ENCODE measurements at regions of chr11 and their contacts with region 1.

Region 1: DNA sequence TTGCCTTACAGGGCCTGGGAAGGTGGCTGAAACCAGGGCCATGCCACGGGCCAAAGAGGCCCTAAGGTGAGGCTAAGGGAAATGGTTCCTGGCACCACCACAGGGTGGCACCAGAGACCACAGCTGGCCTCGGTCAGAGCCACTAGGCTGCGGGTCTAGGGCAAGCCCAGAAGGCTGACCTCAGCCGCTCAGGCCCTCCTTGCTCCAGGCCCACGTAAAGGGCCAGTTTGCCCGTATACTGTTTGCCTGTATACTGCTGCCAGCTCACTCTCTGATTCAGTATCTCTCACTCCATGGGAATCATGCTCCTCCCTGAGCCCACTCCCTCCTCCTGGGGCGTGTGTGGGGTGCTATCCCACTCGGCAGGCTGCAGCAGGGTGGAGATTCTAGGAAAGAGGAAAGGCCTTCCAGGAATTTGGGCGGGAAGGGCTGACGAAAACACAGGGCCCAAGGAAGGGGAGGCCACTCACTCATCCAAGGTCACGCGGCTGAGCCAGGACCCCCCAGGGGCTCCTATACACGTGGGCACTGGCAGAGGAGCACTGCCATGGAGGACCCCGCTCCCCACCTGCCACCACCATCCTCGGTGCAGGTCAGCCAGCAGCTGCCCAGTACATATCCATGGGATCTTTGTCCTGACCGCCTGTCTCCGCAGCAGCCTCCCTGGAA is 62.4 kb downstream of the NECTIN1 start:
- DNase-seq: peak in 1 of 2 donors; percentile 84
- H3K4me3 ChIP-seq: no peak overlapping the region
- H3K27ac ChIP-seq: no peak overlapping the region
- H3K4me1 ChIP-seq: peaks cover 0 to 5% of the 10 kb centered on the region in 2 donors
- H3K27me3 ChIP-seq: no peaks in the 10 kb centered on the region
- CTCF ChIP-seq: peak; percentile 87 to 93 (median 91)

Region 2: DNA sequence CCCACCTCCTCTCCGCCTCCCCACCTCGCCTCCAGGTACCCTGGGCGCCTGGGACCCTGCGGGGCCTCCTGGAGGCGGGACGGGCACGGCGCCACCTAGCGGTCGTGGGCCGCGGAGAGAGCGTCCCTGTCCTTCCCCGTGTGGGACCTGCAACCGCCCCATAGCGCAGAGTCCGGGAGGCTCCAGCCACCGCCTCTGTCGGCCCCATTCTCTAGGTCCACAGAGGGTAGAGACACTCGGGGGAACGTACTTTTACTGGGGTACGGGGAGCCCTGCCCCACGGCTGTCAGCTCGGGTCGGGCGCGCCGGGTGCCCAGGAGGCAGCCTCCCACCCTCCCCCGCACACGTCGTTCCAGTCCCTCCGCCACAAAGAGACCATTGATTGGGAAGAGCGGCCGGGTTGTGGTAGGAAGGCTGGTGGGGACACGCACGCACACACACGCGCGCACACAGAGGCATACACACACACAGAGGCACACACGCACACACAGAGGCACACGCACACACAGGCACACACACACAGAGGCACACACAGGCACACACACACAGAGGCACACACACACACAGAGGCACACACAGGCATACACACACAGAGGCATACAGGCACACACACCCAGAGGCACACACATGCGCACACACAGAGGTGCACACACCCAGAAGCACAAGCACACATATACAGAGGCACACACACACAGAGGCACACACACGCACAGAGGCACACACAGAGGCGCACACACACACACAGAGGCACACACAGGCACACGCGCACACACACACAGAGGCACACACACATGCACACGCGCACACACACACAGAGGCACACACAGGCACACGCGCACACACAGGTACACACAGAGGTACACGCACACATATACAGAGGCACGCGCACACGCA is 75.0 kb after region 1 on chr11:
- intact Hi-C with region 1: loop called (anchors 5 kb)
- DNase-seq: no peak
- H3K4me3 ChIP-seq: peak overlapping the region; percentile 36 to 39
- H3K27ac ChIP-seq: no peak overlapping the region
- H3K4me1 ChIP-seq: peaks cover 0 to 7% of the 10 kb centered on the region in 2 donors
- H3K27me3 ChIP-seq: no peaks in the 10 kb centered on the region
- CTCF ChIP-seq: peak; percentile 45 to 75 (median 67)

Region 3: DNA sequence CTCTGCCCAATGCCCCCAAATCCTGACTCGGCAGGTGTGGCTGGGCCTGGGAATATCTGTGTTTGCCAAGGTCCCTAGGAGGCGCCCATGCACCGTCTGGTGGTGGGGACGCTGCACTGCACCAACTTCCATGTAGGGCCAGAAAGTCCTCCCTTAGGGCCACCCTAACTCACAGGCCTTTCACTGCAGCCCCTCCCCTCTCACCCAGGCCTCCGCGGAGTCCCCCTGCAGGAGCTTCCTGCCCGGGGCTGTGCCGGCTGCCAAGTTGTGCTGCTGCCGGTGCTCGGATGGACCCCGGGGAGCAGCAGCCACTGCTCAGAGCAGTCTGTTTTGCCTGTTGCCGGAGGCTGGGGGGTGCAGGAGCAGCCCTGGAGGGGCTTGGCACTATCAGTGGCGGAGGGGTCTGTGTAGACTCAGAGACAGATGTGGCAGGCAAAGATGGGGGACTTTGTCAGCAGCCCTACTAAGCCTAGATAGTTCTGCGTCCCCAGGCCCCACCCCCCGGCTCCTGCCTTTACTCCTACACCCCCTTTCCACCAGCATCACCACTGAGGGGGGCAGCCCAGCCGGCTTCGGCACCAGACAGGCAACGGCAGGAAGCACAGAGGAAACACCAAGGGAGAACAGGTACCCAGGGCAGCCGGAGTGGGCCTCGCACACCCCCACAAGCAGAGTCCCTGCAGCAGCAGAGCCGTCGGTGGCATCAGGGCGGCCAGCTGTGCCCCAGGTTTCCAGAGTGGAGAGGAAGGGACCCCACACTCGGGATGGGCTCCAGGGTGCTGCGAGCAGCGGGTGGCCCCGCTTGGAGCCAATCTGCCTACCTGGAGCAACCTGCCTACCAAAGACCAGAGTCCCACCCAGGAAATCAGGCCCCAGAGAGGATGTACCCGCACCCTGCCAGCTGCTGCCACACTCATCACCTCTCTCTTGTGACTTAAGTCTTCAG is 347.0 kb after region 1 on chr11:
- intact Hi-C with region 1: loop called (anchors 5 kb)
- DNase-seq: no peak
- H3K4me3 ChIP-seq: no peak overlapping the region
- H3K27ac ChIP-seq: no peak overlapping the region
- H3K4me1 ChIP-seq: no peaks in the 10 kb centered on the region
- H3K27me3 ChIP-seq: no peaks in the 10 kb centered on the region
- CTCF ChIP-seq: peak in 2 of 3 experiments; percentile 51 to 56

Region 4: DNA sequence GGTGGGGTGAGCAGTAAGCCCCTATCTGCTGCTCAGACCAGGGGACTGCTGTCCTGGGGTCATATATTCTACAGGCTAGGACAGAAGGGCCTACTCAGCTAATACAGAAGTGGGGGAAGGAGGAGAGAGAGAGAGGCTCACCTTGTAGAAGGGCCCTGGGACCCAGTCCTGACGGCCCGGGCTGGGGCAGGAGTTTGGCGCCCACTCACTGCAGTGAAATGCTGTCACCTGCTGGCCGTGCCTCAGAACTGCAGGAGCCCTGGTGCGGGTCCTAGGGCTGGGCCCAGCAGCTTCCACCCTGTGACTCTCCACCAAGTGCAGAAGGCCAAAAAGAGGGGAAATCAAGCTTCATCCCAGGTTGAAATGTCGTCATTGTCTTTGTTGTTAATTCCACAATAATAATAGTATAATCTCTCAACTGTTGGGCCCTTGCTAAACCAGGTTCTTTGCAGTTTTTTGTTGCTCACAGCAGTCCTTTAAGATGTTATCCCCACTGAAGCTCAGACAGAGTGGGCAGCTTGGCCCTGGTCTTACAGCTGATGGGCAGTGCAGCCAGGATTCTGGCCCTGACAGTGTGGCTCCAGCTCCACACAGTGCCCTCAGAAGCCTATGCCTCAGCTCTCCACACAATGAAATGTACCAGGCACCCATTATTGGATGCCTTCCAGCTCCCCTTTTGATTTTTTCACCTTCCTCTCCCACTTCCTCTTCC is 441.7 kb after region 1 on chr11:
- intact Hi-C with region 1: loop called (anchors 1 kb)
- DNase-seq: peak in 1 of 2 donors; percentile 70
- H3K4me3 ChIP-seq: no peak overlapping the region
- H3K27ac ChIP-seq: no peak overlapping the region
- H3K4me1 ChIP-seq: no peaks in the 10 kb centered on the region
- H3K27me3 ChIP-seq: no peaks in the 10 kb centered on the region
- CTCF ChIP-seq: peak; percentile 94 to 100 (median 99)

Region 5: DNA sequence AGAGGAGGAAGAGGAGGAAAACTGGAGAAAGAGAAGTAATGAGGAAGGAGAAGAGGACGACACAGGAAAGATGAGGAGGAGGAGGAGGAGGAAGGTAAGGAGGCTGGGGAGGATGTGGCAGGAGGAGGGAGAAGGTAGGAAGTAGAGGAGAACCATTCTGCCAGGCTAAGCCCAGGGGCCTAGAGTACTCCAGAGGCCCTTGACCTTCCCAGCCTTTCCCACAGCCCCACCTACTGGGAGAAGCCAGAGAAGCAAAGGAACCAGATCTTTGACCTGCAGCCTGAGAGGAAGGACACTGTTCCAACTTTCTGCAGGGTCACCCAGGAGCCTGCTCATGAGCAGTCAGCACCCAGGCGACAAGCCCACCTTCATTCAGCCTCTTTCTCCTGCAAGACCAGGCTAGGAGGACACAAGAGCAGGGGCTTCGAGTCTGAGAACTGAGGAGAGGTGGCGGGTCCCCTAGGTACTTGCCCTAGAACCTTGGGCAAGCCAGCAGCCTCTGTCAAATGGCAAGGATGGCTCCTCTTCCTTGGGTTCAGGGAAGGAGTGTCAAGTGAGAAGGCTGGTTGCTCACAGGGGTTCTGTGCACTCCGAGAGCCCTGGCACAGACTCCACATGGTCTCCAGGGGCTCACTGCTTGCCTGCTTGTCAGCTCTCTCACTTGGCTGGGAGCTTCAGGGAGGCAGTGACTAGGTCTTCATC is 516.3 kb after region 1 on chr11:
- intact Hi-C with region 1: no loop called
- DNase-seq: peak in 1 of 2 donors; percentile 62
- H3K4me3 ChIP-seq: no peak overlapping the region
- H3K27ac ChIP-seq: no peak overlapping the region
- H3K4me1 ChIP-seq: no peaks in the 10 kb centered on the region
- H3K27me3 ChIP-seq: no peaks in the 10 kb centered on the region
- CTCF ChIP-seq: peak in 1 of 3 experiments; percentile 14

Region 6: GRCh38 chr11:120303004-120303637 is 636.5 kb after region 1 on chr11:
- intact Hi-C with region 1: loop called (anchors 10 kb)
- DNase-seq: peak in 1 of 2 donors; percentile 82
- H3K4me3 ChIP-seq: no peak overlapping the region
- H3K27ac ChIP-seq: no peak overlapping the region
- H3K4me1 ChIP-seq: peaks cover 0 to 4% of the 10 kb centered on the region in 2 donors
- H3K27me3 ChIP-seq: no peaks in the 10 kb centered on the region
- CTCF ChIP-seq: peak; percentile 57 to 86 (median 81)

Measured in ascending aorta (tissue), 2 donors.